ENCODE measurements at regions of chr4 and their contacts with region 1.

Region 1: DNA sequence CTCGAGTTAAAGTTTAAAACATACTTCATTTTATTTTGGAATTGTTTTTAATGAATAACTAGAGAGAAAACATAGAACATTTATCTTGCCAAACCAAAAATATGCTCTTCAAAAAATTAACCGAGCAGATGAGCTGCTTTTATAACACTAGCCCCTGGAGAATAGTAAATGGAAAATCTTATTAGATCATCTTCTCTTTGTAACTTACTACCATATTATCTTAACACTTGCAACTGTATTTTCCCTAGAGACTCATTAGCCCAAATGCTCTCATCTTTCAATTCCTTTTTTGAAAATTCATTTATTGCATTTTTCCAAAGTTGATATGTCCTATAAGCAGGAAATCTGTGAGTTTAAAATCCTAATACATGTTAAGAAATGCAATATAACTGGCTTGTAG is 143.3 kb downstream of the CAMK2D start:
- DNase-seq: no peak
- H3K4me3 ChIP-seq: no peak overlapping the region
- H3K27ac ChIP-seq: no peak overlapping the region
- H3K4me1 ChIP-seq: no peaks in the 10 kb centered on the region
- H3K27me3 ChIP-seq: no peaks in the 10 kb centered on the region
- CTCF ChIP-seq: no peak

Region 2: DNA sequence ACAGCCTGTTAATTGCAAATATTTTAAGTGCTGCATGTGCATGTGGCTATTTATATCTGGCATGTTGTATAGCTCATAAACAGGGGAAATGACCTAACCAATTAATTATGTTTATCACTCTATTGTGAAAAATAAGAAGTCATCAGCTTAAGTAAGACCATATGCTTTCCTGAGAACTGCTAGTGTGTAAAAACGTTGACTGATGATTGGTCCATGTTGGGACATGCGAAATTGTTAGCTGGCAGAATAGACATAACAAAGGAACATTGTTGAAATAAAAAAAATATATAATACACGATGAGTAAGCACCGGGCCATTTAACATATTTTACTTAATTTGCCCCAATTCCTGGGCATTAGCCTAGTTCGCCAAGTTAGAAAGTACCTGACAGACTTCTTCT is 361.3 kb before region 1 on chr4:
- intact Hi-C with region 1: no loop called
- DNase-seq: no peak
- H3K4me3 ChIP-seq: no peak overlapping the region
- H3K27ac ChIP-seq: no peak overlapping the region
- H3K4me1 ChIP-seq: no peaks in the 10 kb centered on the region
- H3K27me3 ChIP-seq: no peaks in the 10 kb centered on the region
- CTCF ChIP-seq: no peak

Region 3: GRCh38 chr4:113564493-113564892 is 53.7 kb before region 1 on chr4:
- intact Hi-C with region 1: loop called (anchors 10 kb)
- DNase-seq: no peak
- H3K4me3 ChIP-seq: no peak overlapping the region
- H3K27ac ChIP-seq: no peak overlapping the region
- H3K4me1 ChIP-seq: no peaks in the 10 kb centered on the region
- H3K27me3 ChIP-seq: no peaks in the 10 kb centered on the region
- CTCF ChIP-seq: no peak

Region 4: GRCh38 chr4:114025176-114025777 is 407.1 kb after region 1 on chr4:
- intact Hi-C with region 1: no loop called
- DNase-seq: peak; percentile 69
- H3K4me3 ChIP-seq: no peak overlapping the region
- H3K27ac ChIP-seq: no peak overlapping the region
- H3K4me1 ChIP-seq: no peaks in the 10 kb centered on the region
- H3K27me3 ChIP-seq: no peaks in the 10 kb centered on the region
- CTCF ChIP-seq: no peak

Measured in colonic mucosa (tissue), 4 donors.